ENCODE measurements at regions of chr22 and their contacts with region 1.

Region 1: GRCh38 chr22:45553351-45554039 is 50.8 kb downstream of the FBLN1 start:
- H3K4me3 ChIP-seq: no peak overlapping the region
- H3K27ac ChIP-seq: no peak overlapping the region
- H3K4me1 ChIP-seq: no peaks in the 10 kb centered on the region
- CTCF ChIP-seq: peak; percentile 93

Region 2: GRCh38 chr22:45268958-45269844 is 284.3 kb before region 1 on chr22:
- CTCF ChIA-PET with region 1: interaction called, 25 read pairs
- POLR2A ChIA-PET with region 1: no interaction called
- H3K4me3 ChIP-seq: peak overlapping the region; percentile 56
- H3K27ac ChIP-seq: peak overlapping the region; percentile 28; the same call in 1 of the 2 replicates
- H3K4me1 ChIP-seq: peaks cover 4% of the 10 kb centered on the region; the same call in 1 of the 2 replicates
- CTCF ChIP-seq: peak; percentile 69; the same call in 1 of the 2 replicates

Region 3: DNA sequence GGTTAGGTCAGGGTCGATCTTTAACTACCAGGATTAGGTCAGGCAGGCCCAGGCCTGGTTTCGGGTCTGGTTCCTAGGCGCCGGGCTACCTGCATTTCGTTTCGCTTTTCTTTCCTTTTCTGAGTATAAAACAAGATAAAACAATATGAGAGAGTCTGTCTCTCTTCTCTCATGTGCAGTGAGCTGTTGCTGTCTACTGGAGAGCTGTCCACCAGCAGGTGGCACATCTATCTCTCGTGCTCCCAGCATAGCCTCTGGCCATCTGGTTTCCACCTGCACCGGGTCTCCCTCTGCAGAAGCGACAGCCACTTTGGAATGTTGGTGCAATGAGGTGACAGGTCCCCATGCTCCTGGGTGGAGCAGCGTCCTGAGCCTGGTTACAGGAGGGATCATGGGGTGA is 112.4 kb before region 1 on chr22:
- CTCF ChIA-PET with region 1: interaction called, 63 read pairs
- POLR2A ChIA-PET with region 1: no interaction called
- H3K4me3 ChIP-seq: no peak overlapping the region
- H3K27ac ChIP-seq: no peak overlapping the region
- H3K4me1 ChIP-seq: no peaks in the 10 kb centered on the region
- CTCF ChIP-seq: peak; percentile 78

Region 4: DNA sequence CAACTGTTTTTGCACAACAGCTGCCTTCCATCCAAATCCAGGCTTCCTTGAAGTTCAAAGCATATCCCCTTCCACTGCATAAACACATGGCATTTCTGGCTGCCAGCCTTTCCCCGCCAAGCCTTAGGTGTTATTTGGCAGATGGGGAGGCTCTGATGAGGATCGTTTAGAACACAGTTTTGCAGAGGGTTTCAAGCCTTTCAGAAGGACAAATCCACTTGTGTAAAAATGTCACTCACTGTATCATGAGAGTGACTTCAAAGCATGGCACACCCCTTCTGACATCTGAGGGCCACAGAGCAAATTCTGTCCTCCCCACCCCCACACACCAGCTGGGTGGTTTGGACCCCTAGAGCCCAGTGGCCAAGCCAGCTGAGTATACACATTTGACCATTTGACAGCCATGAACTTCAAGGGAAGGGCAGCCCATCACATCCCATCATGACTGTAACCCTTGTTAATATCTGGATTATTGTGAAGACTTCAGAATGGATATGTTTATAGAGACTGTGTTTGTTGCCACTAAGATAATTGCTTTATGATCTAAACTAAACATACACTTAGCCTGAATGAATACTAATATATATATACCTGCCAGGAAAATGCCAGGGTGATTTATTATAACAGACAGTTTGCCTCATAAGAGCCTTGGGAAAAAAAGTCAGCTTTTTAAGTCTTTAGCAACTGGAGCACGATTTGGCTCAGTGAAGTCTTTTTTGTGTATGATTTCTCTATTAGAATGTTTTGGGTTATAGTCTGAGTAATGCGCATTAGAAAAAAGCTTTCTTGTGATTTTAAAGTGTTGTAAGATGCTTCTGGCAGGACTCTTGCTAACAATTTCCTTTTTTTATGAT is 18.9 kb before region 1 on chr22:
- CTCF ChIA-PET with region 1: interaction called, 10 read pairs
- POLR2A ChIA-PET with region 1: no interaction called
- H3K4me3 ChIP-seq: no peak overlapping the region
- H3K27ac ChIP-seq: no peak overlapping the region
- H3K4me1 ChIP-seq: peaks cover 28% of the 10 kb centered on the region
- CTCF ChIP-seq: no peak

Region 5: DNA sequence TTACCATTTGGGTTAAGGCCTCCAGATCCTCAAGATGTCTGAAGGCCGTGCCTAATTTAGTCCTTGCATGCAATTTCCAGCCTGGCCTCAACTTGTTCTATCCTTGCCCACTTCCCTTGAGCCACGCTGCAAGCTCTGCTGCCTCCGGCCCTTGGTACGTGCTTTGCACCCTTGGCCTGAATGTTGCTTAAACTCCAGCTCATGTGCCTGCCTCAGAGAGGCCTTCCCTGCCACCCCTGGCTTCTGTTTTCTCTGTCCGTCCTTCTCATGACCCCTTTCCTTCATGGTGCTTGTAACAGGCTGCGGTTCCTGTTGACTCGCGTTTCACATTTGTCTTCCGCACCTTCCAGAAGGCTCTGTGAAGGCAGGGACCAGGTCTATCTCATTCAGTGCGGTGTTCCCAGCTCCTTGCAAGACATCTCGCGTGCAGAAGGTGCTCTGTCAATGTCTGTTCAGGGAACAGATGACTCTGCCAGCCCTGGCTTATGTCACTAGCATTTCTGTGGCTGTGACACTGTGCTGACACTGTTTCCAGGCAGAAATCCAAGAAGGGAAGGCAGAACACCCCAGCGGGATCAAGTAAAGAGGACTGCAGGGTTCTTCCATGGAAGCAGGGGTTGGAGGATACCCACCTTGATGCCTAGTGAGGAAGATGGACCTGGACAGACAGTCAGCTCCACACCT is 11.0 kb after region 1 on chr22:
- CTCF ChIA-PET with region 1: interaction called, 21 read pairs
- POLR2A ChIA-PET with region 1: no interaction called
- H3K4me3 ChIP-seq: no peak overlapping the region
- H3K27ac ChIP-seq: no peak overlapping the region
- H3K4me1 ChIP-seq: no peaks in the 10 kb centered on the region
- CTCF ChIP-seq: no peak

Region 6: GRCh38 chr22:45572423-45572822 is 18.9 kb after region 1 on chr22:
- CTCF ChIA-PET with region 1: interaction called, 11 read pairs
- POLR2A ChIA-PET with region 1: no interaction called
- H3K4me3 ChIP-seq: no peak overlapping the region
- H3K27ac ChIP-seq: no peak overlapping the region
- H3K4me1 ChIP-seq: no peaks in the 10 kb centered on the region
- CTCF ChIP-seq: no peak

Region 7: DNA sequence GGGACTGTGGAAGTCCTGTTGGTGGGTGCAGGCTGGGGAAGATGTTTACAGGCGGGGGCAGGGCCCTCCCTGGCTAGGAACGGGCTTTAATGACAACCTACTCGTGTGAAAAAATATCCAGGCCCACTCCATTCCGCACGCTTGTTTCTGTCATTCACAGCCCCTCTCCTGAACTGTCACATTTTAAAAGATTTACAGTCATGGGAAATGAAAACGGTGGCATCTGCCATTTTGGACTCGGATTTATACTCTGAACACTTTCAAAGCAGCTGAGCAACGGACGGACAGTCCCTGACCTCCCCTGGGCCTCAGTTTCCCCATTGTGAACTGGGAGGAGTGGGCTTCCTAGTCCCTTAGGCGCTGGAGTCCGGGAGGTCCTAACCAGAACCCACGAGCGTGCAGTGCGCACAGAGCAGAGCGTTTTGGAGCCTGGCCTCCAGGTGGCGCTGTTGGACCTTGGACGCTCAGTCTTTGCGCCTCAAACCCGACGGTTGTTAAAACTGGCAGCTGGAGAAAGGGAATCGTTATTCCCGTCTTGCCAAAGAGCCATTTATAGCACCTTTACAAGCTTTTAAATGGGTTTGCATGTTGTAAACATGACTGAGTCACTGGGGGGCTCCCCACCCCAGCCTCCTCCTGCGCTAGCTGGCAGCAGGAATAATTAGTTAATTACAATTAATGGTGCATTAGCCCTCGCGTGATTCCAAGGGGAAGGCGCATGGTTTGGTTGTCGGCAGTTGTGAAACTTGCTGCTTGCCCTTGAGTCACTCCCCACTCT is 24.4 kb after region 1 on chr22:
- CTCF ChIA-PET with region 1: interaction called, 11 read pairs
- POLR2A ChIA-PET with region 1: no interaction called
- H3K4me3 ChIP-seq: no peak overlapping the region
- H3K27ac ChIP-seq: no peak overlapping the region
- H3K4me1 ChIP-seq: no peaks in the 10 kb centered on the region
- CTCF ChIP-seq: peak; percentile 92

Region 8: GRCh38 chr22:45896261-45896951 is 342.9 kb after region 1 on chr22:
- CTCF ChIA-PET with region 1: no interaction called
- POLR2A ChIA-PET with region 1: no interaction called
- H3K4me3 ChIP-seq: no peak overlapping the region
- H3K27ac ChIP-seq: no peak overlapping the region
- H3K4me1 ChIP-seq: no peaks in the 10 kb centered on the region
- CTCF ChIP-seq: no peak

Measured in HEK293 (cell line).